Activated CD4-positive, alpha-beta T cell treated with anti-CD3 and anti-CD28 coated beads for 36 hours (primary cell): ENCODE measurements at regions of chr10 and their contacts with region 1.

Region 1: DNA sequence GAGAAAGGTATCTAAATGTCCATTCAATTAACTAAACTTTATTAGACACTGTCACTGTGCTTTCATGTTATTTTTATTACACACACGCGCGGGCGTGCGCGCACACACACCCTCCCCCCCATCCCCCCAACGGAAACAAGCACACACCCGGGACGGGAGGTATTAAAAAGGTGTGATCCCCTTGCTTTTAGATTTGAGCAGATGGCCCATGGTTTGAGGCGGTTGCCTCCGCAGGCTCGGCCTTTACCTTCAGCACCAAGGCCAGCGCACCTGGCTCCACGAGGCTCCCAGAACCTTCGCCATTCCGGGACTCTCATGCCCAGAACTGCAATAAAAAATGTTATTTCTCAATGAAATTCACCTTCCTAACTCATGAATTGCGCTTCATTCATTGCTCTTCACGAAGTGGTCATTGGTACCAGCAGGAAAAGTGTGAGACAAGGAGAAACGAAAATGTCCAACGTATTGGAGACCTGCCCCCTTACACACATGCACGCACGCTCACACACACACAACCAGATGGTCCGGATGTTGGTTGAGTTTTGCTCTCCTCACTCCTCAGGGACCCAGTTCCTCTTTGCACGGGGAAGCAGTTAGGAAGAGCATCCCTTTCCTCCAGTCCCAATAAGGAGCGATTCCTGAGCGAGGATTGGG is 20.8 kb upstream of the PTF1A start:
- DNase-seq: peak; percentile 35
- ATAC-seq: no peak
- H3K4me3 Mint-ChIP-seq: no peak overlapping the region
- H3K27ac Mint-ChIP-seq: no peak overlapping the region
- H3K4me1 Mint-ChIP-seq: peaks cover 3% of the 10 kb centered on the region
- H3K27me3 Mint-ChIP-seq: peaks cover 48% of the 10 kb centered on the region

Region 2: DNA sequence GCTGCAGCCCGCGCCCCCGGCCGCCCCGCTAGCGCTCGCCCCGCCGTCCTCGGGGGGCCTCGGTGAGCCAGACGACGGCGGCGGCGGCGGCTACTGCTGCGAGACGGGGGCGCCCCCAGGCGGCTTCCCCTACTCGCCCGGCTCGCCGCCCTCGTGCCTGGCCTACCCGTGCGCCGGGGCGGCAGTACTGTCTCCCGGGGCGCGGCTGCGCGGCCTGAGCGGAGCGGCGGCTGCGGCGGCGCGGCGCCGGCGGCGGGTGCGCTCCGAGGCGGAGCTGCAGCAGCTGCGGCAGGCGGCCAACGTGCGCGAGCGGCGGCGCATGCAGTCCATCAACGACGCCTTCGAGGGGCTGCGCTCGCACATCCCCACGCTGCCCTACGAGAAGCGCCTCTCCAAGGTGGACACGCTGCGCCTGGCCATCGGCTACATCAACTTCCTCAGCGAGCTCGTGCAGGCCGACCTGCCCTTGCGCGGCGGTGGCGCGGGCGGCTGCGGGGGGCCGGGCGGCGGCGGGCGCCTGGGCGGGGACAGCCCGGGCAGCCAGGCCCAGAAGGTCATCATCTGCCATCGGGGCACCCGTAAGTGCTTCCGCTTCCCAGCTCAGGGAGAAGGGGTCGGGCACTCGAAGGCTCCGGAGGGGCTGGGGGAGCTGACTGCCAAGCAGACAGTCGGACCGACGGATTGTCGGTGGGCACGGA is 21.5 kb after region 1 on chr10:
- CTCF ChIA-PET with region 1: interaction called, 3 read pairs
- POLR2A ChIA-PET with region 1: no interaction called
- intact Hi-C with region 1: loop called (anchors 2 kb)
- DNase-seq: peak; percentile 38
- ATAC-seq: no peak
- H3K4me3 Mint-ChIP-seq: no peak overlapping the region
- H3K27ac Mint-ChIP-seq: no peak overlapping the region
- H3K4me1 Mint-ChIP-seq: peaks cover 9% of the 10 kb centered on the region
- H3K27me3 Mint-ChIP-seq: peaks cover 56% of the 10 kb centered on the region